Activated naive CD4-positive, alpha-beta T cell treated with anti-CD3 and anti-CD28 coated beads for 36 hours (primary cell): ENCODE measurements at regions of chr2 and their contacts with region 1.

Region 1: DNA sequence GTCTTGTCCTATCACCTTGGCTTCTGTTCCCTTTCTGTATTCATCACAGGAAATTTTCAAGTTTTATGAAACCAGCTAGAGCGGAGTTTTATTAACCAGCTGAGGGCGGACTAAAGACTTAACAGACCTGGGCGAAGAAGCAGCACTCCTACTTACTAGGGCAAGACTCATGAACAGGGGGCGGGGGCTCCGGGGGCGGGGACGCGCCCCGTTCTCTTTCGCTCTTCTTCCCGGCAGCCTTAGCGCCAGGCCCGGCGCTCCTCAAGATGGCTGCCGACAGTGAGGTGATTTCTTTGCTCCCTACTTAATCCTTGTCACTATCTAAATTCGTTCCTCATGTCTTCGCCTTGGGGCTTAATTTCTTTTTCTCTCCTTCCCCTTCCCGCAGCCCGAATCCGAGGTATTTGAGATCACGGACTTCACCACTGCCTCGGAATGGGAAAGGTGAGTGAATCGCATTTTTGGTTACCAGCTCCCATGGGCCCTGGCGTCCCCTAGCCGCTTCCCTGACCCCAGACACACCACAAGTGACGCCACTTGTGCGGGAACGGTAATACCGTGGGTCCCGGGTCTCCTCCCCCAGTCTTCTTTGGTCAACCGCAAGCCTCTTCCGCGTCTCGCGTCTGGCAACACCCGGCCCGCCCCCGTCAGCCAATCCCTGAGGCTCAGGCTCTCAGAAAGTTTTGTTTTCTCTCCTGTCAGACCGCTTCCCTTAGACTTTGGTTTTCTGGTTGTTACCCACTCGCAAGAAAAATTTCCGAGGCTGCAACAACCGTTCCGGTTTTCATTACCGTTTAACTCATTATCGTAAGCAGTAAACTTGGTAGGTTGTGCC is at the start of gene RAB3GAP1:
- DNase-seq: peak; percentile 97
- H3K4me3 Mint-ChIP-seq: peak within 1 kb of the TSS; percentile 99
- H3K27ac Mint-ChIP-seq: peak within 1 kb of the TSS; percentile 100
- H3K4me1 Mint-ChIP-seq: peaks cover 40% of the 10 kb centered on the region
- H3K27me3 Mint-ChIP-seq: no peaks in the 10 kb centered on the region
- total RNA-seq, gene RAB3GAP1: 55.5 to 59.7 TPM

Region 2: GRCh38 chr2:134118279-134119116 is 933.8 kb before region 1 on chr2:
- CTCF ChIA-PET with region 1: no interaction called
- intact Hi-C with region 1: loop called (anchors 10 kb)
- DNase-seq: peak; percentile 96
- H3K4me3 Mint-ChIP-seq: no peak overlapping the region
- H3K27ac Mint-ChIP-seq: no peak overlapping the region
- H3K4me1 Mint-ChIP-seq: peaks cover 32% of the 10 kb centered on the region
- H3K27me3 Mint-ChIP-seq: peaks cover 3% of the 10 kb centered on the region

Region 3: GRCh38 chr2:134918526-134919340 is 133.5 kb before region 1 on chr2 and contains the start of gene CCNT2:
- CTCF ChIA-PET with region 1: no interaction called
- intact Hi-C with region 1: loop called (anchors 1 kb)
- DNase-seq: peak; percentile 99
- H3K4me3 Mint-ChIP-seq: peak within 1 kb of the TSS; percentile 95
- H3K27ac Mint-ChIP-seq: peak within 1 kb of the TSS; percentile 98
- H3K4me1 Mint-ChIP-seq: peaks cover 24% of the 10 kb centered on the region
- H3K27me3 Mint-ChIP-seq: no peaks in the 10 kb centered on the region
- total RNA-seq, gene CCNT2: 31.9 to 33.2 TPM

Region 4: DNA sequence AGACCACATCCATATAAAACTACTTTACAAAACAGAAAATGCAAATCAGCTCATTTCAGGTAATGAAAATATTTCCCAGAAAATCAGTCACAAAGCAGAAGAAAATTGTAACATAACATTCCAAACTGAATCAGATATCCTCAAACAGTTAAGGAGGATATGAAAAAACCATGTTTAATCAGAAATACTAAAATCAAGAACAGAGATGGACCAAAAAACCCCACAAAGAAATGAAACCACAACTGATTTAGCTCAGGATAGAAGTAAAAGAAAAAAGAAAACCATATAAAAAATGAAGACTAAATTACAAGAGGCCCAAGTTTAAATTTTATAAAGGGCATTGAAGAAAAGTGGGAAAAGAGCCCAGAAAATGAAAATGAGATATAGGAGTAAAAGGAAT is 102.7 kb after region 1 on chr2:
- CTCF ChIA-PET with region 1: no interaction called
- intact Hi-C with region 1: loop called (anchors 2 kb)
- DNase-seq: no peak
- H3K4me3 Mint-ChIP-seq: no peak overlapping the region
- H3K27ac Mint-ChIP-seq: peak overlapping the region; percentile 68
- H3K4me1 Mint-ChIP-seq: peaks cover 30% of the 10 kb centered on the region
- H3K27me3 Mint-ChIP-seq: no peaks in the 10 kb centered on the region

Region 5: GRCh38 chr2:135664623-135665068 is 612.4 kb after region 1 on chr2:
- CTCF ChIA-PET with region 1: no interaction called
- intact Hi-C with region 1: loop called (anchors 1 kb)
- DNase-seq: no peak
- H3K4me3 Mint-ChIP-seq: no peak overlapping the region
- H3K27ac Mint-ChIP-seq: peak overlapping the region; percentile 24
- H3K4me1 Mint-ChIP-seq: peaks cover 27% of the 10 kb centered on the region
- H3K27me3 Mint-ChIP-seq: no peaks in the 10 kb centered on the region

Region 6: GRCh38 chr2:135985018-135985825 is 933.0 kb after region 1 on chr2 and contains the start of gene DARS1:
- CTCF ChIA-PET with region 1: no interaction called
- intact Hi-C with region 1: loop called (anchors 10 kb)
- DNase-seq: peak; percentile 90
- H3K4me3 Mint-ChIP-seq: peak within 1 kb of the TSS; percentile 95
- H3K27ac Mint-ChIP-seq: peak within 1 kb of the TSS; percentile 97
- H3K4me1 Mint-ChIP-seq: peaks cover 39% of the 10 kb centered on the region
- H3K27me3 Mint-ChIP-seq: no peaks in the 10 kb centered on the region
- total RNA-seq, gene DARS1: 161 to 177 TPM